Tibial artery (tissue), 4 donors: ENCODE measurements at regions of chr15 and their contacts with region 1.

Region 1: GRCh38 chr15:33700695-33701304 is 267.5 kb upstream of the CHRM5 start:
- DNase-seq: peak; percentile 67 to 82
- H3K4me3 ChIP-seq: no peak overlapping the region
- H3K27ac ChIP-seq: no peak overlapping the region
- H3K4me1 ChIP-seq: peaks cover 0 to 6% (median 2%) of the 10 kb centered on the region in 4 donors
- H3K27me3 ChIP-seq: no peaks in the 10 kb centered on the region
- CTCF ChIP-seq: peak; percentile 88 to 90

Region 2: DNA sequence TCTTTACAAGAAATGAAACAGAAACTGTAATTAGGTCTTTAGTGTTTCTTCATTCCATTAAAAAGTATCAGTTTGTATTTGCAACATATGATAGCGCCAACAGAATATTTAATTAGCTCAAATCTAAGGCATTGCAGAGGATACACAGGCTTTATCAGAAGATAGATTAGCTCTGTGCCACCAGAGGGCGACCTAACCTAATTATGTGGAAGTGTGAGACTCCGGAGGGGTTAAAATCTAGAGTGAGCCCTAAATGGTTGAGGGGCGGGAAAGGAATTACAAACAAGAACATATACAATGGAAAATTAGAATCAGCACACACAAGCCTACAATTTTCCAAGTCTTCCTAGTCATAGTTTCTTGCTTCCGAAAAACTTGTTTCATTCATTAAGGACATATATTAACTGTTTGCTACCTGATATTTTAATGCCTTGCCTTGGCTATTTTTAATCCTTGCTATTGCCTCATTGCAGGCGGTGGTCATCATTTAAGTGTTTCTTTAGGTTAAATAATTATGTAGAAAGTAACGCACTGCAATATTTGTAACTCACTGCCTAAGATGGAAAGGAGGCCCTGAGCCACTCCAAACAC is 408.0 kb before region 1 on chr15:
- intact Hi-C with region 1: loop called (anchors 5 kb)
- DNase-seq: peak in 1 of 2 donors; percentile 60
- H3K4me3 ChIP-seq: peak overlapping the region in 1 of 2 donors; percentile 45
- H3K27ac ChIP-seq: no peak overlapping the region
- H3K4me1 ChIP-seq: peaks cover 0 to 19% (median 7%) of the 10 kb centered on the region in 4 donors
- H3K27me3 ChIP-seq: no peaks in the 10 kb centered on the region
- CTCF ChIP-seq: peak; percentile 55 to 65

Region 3: GRCh38 chr15:33313491-33313890 is 387.3 kb before region 1 on chr15:
- intact Hi-C with region 1: loop called (anchors 2 kb)
- DNase-seq: no peak
- H3K4me3 ChIP-seq: no peak overlapping the region
- H3K27ac ChIP-seq: no peak overlapping the region
- H3K4me1 ChIP-seq: peaks cover 0 to 14% (median 9%) of the 10 kb centered on the region in 4 donors
- H3K27me3 ChIP-seq: no peaks in the 10 kb centered on the region
- CTCF ChIP-seq: no peak